Activated CD8-positive, alpha-beta memory T cell treated with anti-CD3 and anti-CD28 coated beads, Interleukin-2, amount 10 ng/mL, durations not matched to agents 7 days and 5 days (primary cell): ENCODE measurements at regions of chr3 and their contacts with region 1.

Region 1: DNA sequence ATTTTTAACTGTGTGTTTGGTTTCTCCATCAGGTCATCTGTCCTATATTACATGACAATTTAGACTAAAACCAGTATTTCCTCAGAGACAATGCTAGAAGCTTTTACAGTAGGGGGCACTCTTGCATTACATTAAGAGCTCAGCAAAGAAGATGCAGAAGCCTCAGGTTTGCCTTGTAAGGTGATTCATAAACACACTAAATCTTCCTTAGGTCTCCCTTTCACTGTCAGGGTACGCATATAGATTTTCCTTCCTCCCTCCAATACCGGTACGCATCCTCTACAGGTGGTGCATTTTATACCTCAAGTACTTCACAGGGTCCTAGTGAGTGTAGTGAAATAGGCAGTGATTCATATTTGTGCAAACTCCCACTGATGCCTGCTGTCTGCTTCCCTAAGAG is 46.5 kb downstream of the CD86 start:
- DNase-seq: no peak
- ATAC-seq: peak; percentile 50
- H3K4me3 Mint-ChIP-seq: peak overlapping the region; percentile 64
- H3K27ac Mint-ChIP-seq: no peak overlapping the region
- H3K4me1 Mint-ChIP-seq: peaks cover 28% of the 10 kb centered on the region
- H3K27me3 Mint-ChIP-seq: no peaks in the 10 kb centered on the region

Region 2: DNA sequence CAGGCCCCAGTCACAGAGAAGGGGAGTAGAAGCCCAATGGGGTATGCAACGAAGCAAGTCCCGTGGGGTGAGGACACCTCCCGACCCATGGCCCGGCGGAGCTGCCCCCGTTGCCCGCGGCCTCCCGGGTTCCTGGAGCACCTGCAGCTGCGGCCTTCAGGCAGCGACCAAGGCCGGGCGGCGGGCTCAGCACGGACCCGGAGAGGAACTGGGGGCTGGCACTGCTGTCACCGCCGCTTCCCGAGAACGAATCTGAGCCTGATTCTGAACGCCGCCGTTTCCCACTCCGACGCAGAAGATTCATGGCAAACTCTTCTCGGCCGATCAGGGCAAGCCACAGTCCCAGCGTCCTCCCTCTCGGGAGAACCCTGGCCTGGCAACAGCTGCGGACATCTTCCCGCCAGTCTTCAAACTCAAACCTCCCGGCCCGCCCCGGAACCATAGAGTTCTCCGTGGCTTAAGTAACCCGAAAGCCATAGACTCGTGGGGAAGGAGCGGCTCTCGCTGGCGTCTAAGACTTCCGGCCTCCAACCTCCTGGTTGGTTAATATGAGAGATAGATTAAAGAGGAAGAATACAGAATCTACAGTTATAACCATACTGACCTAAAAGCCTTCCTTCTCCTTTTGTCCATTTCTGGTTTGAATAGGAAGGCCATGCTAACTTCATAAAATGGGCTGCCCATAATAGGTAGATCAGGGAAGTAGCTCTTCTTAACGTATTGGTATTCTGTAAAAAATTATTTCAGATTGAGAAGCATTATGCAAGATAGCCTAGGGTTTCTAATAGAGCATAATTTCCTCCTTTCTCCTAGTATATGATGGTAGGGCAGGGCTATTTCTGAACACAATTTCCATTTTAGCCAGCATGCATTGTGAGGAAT is 555.8 kb before region 1 on chr3 and contains the start of gene POLQ:
- CTCF ChIA-PET with region 1: interaction called, 26 read pairs
- DNase-seq: peak; percentile 95
- ATAC-seq: peak; percentile 95
- H3K4me3 Mint-ChIP-seq: peak within 1 kb of the TSS; percentile 95
- H3K27ac Mint-ChIP-seq: peak within 1 kb of the TSS; percentile 95
- H3K4me1 Mint-ChIP-seq: peaks cover 34% of the 10 kb centered on the region
- H3K27me3 Mint-ChIP-seq: no peaks in the 10 kb centered on the region
- total RNA-seq, gene POLQ: 34.3 to 55.8 TPM

Region 3: DNA sequence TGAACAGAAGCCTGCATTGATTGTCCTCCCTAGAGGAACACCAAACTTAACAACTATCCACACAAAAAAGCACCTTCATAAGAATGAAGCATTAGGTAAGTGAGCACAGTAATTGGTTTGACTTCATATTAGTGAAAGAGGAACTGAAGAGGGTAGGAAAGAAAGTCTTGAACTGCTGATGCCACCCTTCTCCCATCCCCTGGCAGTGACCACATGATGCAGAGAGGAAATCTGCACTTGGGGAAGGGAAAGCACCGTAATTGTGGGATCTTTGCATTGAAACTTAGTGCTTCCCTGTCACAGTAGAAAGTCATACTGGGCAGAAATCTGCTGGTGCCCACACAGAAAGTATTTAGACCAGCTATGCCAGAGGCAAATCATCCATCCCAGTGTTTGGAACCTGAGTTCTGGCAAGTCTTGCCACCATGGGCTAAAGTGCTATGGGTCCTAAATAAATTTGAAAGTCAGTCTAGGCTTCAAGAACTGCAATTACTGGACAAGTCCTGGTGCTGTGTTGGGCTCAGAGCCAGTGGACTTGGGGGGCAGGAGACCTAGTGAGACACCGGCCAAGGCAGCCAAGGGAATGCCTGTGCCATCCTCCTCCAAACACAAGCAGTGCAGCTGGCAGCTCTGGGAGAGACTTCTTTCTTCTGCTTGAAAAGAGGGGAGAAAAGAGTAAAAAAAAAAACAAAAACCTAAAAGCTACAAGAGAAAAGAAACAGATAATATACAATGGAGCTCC is 143.8 kb before region 1 on chr3:
- CTCF ChIA-PET with region 1: no interaction called
- DNase-seq: no peak
- ATAC-seq: no peak
- H3K4me3 Mint-ChIP-seq: no peak overlapping the region
- H3K27ac Mint-ChIP-seq: no peak overlapping the region
- H3K4me1 Mint-ChIP-seq: no peaks in the 10 kb centered on the region
- H3K27me3 Mint-ChIP-seq: peaks cover 13% of the 10 kb centered on the region

Region 4: GRCh38 chr3:122112754-122113153 is 11.1 kb after region 1 on chr3:
- CTCF ChIA-PET with region 1: interaction called, 26 read pairs
- DNase-seq: no peak
- ATAC-seq: no peak
- H3K4me3 Mint-ChIP-seq: no peak overlapping the region
- H3K27ac Mint-ChIP-seq: no peak overlapping the region
- H3K4me1 Mint-ChIP-seq: no peaks in the 10 kb centered on the region
- H3K27me3 Mint-ChIP-seq: peaks cover 3% of the 10 kb centered on the region

Region 5: DNA sequence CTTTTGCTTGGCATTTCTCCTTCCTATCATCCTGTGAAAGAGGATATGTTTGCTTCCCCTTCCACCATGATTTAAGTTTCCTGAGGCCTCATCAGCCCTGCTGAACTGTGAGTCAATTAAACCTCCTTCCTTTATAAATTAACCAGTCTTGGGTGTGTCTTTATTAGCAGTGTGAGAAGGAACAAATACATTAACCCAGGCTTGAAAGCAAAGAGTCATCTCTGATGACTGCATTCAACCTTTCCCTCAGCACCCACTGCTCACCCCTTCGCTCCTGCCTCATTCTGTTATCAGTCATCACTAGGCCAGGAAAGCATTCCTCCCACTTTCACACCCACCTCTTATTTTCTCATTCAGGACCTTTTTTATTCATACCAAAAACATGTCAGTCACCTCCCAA is 22.2 kb after region 1 on chr3:
- CTCF ChIA-PET with region 1: no interaction called
- DNase-seq: no peak
- ATAC-seq: no peak
- H3K4me3 Mint-ChIP-seq: no peak overlapping the region
- H3K27ac Mint-ChIP-seq: no peak overlapping the region
- H3K4me1 Mint-ChIP-seq: no peaks in the 10 kb centered on the region
- H3K27me3 Mint-ChIP-seq: peaks cover 29% of the 10 kb centered on the region

Region 6: GRCh38 chr3:122245513-122246174 is 144.0 kb after region 1 on chr3:
- CTCF ChIA-PET with region 1: interaction called, 14 read pairs
- DNase-seq: no peak
- ATAC-seq: peak; percentile 36
- H3K4me3 Mint-ChIP-seq: peak overlapping the region; percentile 75
- H3K27ac Mint-ChIP-seq: peak overlapping the region; percentile 89
- H3K4me1 Mint-ChIP-seq: peaks cover 18% of the 10 kb centered on the region
- H3K27me3 Mint-ChIP-seq: peaks cover 33% of the 10 kb centered on the region

Region 7: GRCh38 chr3:122258757-122259371 is 157.2 kb after region 1 on chr3:
- CTCF ChIA-PET with region 1: interaction called, 80 read pairs
- DNase-seq: peak; percentile 84
- ATAC-seq: peak; percentile 94
- H3K4me3 Mint-ChIP-seq: no peak overlapping the region
- H3K27ac Mint-ChIP-seq: no peak overlapping the region
- H3K4me1 Mint-ChIP-seq: peaks cover 19% of the 10 kb centered on the region
- H3K27me3 Mint-ChIP-seq: peaks cover 20% of the 10 kb centered on the region

Region 8: DNA sequence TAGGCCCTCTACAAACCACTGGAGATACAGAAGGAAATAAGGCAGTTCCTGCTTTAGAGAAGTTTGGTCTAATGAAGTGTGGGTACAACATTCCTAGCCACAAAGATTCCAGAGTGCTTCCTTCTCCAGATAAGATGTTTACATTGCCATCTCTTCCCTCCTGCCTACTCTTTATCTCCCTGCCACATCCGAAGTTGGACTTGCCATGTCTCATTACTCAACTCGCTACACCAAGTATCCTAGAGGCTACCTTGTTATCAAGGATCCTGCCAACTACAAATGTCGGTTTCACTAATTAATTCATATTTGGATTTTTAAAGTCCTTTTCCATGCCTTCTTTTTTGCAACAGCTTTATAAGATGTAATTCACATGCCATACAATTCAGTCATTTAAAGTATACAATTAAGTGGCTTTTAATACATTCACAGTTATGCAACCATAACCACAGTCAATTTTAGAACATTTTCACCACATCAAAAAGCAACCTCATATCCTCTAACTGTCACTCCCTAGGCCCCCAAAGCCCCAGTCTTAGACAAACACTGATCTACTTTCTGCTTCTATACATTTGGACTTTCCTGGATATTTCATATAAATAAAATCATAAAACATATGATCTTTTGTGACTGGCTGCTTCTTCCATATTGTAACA is 169.7 kb after region 1 on chr3:
- CTCF ChIA-PET with region 1: no interaction called
- DNase-seq: no peak
- ATAC-seq: peak; percentile 49
- H3K4me3 Mint-ChIP-seq: no peak overlapping the region
- H3K27ac Mint-ChIP-seq: no peak overlapping the region
- H3K4me1 Mint-ChIP-seq: peaks cover 30% of the 10 kb centered on the region
- H3K27me3 Mint-ChIP-seq: no peaks in the 10 kb centered on the region

Region 9: DNA sequence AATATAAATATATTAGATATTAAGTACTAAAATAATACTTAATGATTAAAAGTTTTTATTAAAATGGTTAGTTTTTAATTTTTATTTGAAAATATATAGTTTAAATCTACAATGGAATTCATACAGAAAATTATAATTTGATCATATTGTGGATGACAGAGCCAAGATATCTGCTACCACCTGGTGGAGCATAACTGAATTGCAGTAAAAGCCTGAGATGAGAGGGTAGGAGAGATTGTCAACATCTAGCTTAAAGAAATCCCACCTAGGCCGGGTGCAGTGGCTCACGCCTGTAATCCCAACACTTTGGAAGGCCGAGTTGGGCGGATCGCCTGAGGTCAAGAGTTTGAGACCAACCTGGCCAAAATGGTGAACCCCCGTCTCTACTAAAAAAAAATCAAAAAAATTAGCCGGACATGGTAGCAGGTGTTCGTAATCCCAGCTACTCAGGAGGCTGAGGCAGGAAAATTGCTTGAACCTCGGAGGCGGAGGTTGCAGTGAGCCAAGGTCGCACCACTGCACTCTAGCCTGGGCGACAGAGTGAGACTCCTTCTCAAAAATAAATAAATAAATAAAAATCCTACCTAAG is 198.3 kb after region 1 on chr3:
- CTCF ChIA-PET with region 1: interaction called, 19 read pairs
- DNase-seq: peak; percentile 47
- ATAC-seq: no peak
- H3K4me3 Mint-ChIP-seq: no peak overlapping the region
- H3K27ac Mint-ChIP-seq: no peak overlapping the region
- H3K4me1 Mint-ChIP-seq: peaks cover 15% of the 10 kb centered on the region
- H3K27me3 Mint-ChIP-seq: no peaks in the 10 kb centered on the region

Region 10: DNA sequence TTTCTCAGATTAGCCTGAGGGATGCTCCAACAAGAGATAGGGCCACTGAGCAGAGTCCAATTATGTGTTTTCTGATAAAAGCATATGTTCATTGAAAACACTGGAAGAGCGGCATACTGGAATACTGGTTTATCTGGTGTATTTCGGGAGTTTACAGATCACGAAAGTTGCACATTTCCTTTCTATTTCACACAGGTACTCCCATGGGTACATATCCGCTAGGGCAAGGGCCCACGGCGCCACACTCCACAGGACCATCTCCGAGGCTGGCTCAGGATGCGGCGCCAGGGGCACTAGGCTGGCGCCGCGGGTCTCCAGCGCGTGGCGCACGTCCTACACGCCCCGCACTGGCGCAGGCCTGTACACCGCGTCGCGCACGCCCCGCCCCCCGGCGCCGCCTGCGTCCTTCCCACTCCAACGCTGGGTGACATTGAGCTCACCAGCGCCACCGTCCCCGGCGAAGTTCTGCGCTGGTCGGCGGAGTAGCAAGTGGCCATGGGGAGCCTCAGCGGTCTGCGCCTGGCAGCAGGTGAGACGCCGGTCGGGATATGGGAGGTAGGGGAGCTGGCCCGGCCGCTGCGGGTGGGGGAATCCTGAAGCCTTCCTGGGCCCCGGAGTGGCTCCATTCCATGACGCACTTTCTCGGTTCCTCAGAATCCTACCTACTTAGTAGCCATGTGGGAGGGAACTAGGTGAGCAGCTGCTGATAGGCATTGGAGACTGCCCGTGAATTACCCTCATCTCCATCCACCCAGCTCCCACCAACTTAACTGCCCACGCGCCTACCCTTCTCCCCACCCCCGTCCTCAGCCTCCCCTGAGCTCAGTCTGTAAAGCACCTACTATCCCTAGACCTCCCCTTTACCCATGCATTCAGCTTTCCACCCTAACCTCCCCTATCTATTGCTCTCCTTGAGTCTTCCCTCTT is 282.4 kb after region 1 on chr3 and contains the start of gene FAM162A:
- CTCF ChIA-PET with region 1: interaction called, 21 read pairs
- DNase-seq: peak; percentile 95
- ATAC-seq: peak; percentile 97
- H3K4me3 Mint-ChIP-seq: peak within 1 kb of the TSS; percentile 91
- H3K27ac Mint-ChIP-seq: peak within 1 kb of the TSS; percentile 92
- H3K4me1 Mint-ChIP-seq: peaks cover 58% of the 10 kb centered on the region
- H3K27me3 Mint-ChIP-seq: no peaks in the 10 kb centered on the region
- total RNA-seq, gene FAM162A: 51.3 to 63.9 TPM